A673 (cell line): ENCODE measurements at regions of chr6 and their contacts with region 1.

Region 1: GRCh38 chr6:30396833-30397479 is 52.0 kb downstream of the RPP21 start:
- DNase-seq: peak; percentile 81
- H3K4me3 ChIP-seq: no peak overlapping the region
- H3K27ac ChIP-seq: no peak overlapping the region
- H3K4me1 ChIP-seq: no peaks in the 10 kb centered on the region
- H3K27me3 ChIP-seq: peaks cover 32% of the 10 kb centered on the region
- CTCF ChIP-seq: peak; percentile 98

Region 2: DNA sequence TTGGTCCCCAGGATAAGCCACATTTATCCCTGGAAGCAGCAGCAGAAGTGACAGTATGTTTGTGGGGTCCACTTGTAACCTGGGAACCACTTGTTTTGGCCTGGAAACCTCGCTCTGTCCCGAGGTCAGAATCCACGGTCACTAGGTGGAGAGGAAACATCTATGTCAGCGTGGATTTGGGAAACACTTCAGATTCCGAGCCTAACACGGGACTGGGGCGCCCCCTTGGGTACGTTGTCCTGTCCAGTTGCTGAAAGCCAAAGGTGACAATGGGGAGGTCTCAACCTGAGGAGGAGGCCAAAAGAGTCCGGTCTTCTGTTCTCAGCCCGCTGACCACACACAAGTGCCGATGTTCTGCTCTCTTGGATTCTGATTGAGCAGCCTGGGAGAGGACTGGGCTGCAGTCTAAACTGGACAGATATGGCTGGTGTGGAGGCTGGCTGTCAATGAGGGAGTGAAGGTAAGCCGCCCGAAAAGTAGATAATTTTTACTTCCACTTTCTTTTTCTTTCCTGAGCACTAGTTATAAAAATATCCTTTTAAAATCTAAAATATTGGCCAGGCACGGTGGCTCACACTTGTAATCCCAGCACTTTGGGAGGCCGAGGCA is 711.1 kb before region 1 on chr6:
- CTCF ChIA-PET with region 1: no interaction called
- POLR2A ChIA-PET with region 1: no interaction called
- intact Hi-C with region 1: no loop called
- DNase-seq: no peak
- H3K4me3 ChIP-seq: no peak overlapping the region
- H3K27ac ChIP-seq: no peak overlapping the region
- H3K4me1 ChIP-seq: no peaks in the 10 kb centered on the region
- H3K27me3 ChIP-seq: no peaks in the 10 kb centered on the region
- CTCF ChIP-seq: no peak

Region 3: GRCh38 chr6:30102970-30103874 is 293.7 kb before region 1 on chr6:
- CTCF ChIA-PET with region 1: no interaction called
- POLR2A ChIA-PET with region 1: no interaction called
- intact Hi-C with region 1: loop called (anchors 10 kb)
- DNase-seq: peak; percentile 95
- H3K4me3 ChIP-seq: peak overlapping the region; percentile 48
- H3K27ac ChIP-seq: no peak overlapping the region
- H3K4me1 ChIP-seq: peaks cover 18% of the 10 kb centered on the region
- H3K27me3 ChIP-seq: peaks cover 43% of the 10 kb centered on the region
- CTCF ChIP-seq: peak; percentile 94

Region 4: DNA sequence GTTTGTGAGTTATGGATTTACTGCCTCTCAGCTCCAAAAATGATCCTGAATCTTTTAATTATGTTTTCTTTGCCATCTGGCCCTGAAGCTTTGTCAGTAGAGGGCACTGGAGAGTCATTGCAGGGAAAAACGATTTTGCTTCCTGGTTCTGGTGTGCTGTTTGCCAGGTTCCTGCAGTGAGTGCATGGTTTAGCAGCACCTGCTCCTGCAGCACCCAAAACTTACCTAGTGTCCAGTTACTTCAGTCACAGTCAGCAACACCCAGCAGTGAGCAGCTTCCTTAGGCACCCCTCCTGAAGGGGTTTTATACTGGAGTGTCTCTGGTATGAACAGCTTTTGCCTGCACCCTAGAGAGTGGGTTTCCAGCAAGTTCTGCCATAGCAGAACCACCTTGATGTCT is 177.7 kb before region 1 on chr6:
- CTCF ChIA-PET with region 1: interaction called, 4 read pairs
- POLR2A ChIA-PET with region 1: no interaction called
- intact Hi-C with region 1: loop called (anchors 2 kb)
- DNase-seq: peak; percentile 74
- H3K4me3 ChIP-seq: no peak overlapping the region
- H3K27ac ChIP-seq: no peak overlapping the region
- H3K4me1 ChIP-seq: no peaks in the 10 kb centered on the region
- H3K27me3 ChIP-seq: no peaks in the 10 kb centered on the region
- CTCF ChIP-seq: peak; percentile 89

Region 5: GRCh38 chr6:30238174-30238795 is 158.7 kb before region 1 on chr6:
- CTCF ChIA-PET with region 1: no interaction called
- POLR2A ChIA-PET with region 1: no interaction called
- intact Hi-C with region 1: loop called (anchors 5 kb)
- DNase-seq: peak; percentile 22
- H3K4me3 ChIP-seq: no peak overlapping the region
- H3K27ac ChIP-seq: no peak overlapping the region
- H3K4me1 ChIP-seq: no peaks in the 10 kb centered on the region
- H3K27me3 ChIP-seq: peaks cover 15% of the 10 kb centered on the region
- CTCF ChIP-seq: peak; percentile 50

Region 6: DNA sequence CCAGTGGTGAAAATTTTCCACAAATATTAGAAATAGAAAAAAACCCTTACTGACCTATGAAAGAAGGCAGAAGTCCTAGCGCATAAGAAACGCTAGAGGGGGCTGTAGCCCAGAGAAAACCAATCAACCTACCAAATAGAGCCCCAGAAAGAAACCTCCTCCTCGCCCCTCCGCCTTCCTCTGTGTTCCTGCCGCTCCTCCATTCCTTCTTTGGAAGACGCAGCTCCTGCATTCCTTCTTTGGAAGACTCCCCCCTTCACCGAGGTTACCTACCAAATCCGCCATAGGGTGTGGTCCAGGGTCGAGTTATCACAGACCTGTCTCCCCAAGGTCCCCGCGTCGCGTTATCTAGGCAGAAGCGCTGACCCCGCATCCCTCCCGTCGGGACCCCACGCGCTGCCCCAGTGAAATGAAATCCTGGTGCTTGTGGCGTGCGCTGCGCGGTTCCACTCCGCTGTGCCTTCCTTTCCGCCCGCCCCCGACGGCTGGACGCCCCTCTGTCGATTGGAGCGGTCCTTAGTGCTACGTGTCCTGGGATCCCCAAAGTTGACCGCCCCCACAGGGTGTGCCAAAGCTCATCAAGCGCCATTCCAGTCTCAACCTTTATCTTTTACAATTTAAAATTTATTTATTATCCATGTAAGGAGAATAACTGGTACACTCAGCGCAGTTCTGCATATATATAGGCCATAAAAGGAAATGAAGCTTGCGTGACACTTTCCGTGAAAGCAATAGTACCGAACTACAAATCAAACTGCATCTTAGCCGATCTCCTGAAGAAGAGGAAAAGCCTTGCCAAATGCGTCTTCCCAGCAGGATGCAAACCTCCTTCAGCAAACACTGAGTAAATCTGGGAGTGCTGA is 39.0 kb before region 1 on chr6:
- CTCF ChIA-PET with region 1: interaction called, 3 read pairs
- POLR2A ChIA-PET with region 1: no interaction called
- intact Hi-C with region 1: loop called (anchors 2 kb)
- DNase-seq: peak; percentile 84
- H3K4me3 ChIP-seq: peak overlapping the region; percentile 47
- H3K27ac ChIP-seq: no peak overlapping the region
- H3K4me1 ChIP-seq: peaks cover 6% of the 10 kb centered on the region
- H3K27me3 ChIP-seq: peaks cover 50% of the 10 kb centered on the region
- CTCF ChIP-seq: peak; percentile 86

Region 7: DNA sequence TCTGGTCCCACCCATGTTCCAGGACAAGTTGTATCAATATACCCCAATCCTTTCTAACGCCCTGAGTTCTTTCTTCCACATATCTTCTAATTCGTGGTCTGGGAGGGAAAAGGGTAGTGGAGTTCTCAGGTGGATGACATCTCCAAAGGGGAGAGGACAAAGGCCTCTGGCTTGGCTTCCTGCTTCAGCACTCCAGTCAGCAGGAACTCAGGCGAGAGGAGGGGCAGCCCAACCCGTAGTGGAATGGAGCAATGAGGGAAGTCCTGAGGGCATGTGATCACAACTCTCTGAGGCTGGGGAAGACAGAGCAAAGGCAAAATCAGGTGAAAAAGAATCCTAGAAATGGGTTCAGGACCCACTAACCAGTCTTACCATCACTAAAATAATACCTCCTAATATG is 303.4 kb after region 1 on chr6:
- CTCF ChIA-PET with region 1: no interaction called
- POLR2A ChIA-PET with region 1: no interaction called
- intact Hi-C with region 1: no loop called
- DNase-seq: no peak
- H3K4me3 ChIP-seq: no peak overlapping the region
- H3K27ac ChIP-seq: no peak overlapping the region
- H3K4me1 ChIP-seq: no peaks in the 10 kb centered on the region
- H3K27me3 ChIP-seq: no peaks in the 10 kb centered on the region
- CTCF ChIP-seq: no peak